ENCODE measurements at regions of chr6 and their contacts with region 1.

Region 1: GRCh38 chr6:44172731-44173500 is 14.3 kb downstream of the CAPN11 start:
- DNase-seq: peak; percentile 71
- H3K4me3 ChIP-seq: no peak overlapping the region
- H3K27ac ChIP-seq: no peak overlapping the region
- H3K4me1 ChIP-seq: peaks cover 19% of the 10 kb centered on the region
- H3K27me3 ChIP-seq: peaks cover 0 to 9% of the 10 kb centered on the region in 2 experiments
- CTCF ChIP-seq: peak; percentile 91 to 96
- POLR2A ChIP-seq: no peak

Region 2: DNA sequence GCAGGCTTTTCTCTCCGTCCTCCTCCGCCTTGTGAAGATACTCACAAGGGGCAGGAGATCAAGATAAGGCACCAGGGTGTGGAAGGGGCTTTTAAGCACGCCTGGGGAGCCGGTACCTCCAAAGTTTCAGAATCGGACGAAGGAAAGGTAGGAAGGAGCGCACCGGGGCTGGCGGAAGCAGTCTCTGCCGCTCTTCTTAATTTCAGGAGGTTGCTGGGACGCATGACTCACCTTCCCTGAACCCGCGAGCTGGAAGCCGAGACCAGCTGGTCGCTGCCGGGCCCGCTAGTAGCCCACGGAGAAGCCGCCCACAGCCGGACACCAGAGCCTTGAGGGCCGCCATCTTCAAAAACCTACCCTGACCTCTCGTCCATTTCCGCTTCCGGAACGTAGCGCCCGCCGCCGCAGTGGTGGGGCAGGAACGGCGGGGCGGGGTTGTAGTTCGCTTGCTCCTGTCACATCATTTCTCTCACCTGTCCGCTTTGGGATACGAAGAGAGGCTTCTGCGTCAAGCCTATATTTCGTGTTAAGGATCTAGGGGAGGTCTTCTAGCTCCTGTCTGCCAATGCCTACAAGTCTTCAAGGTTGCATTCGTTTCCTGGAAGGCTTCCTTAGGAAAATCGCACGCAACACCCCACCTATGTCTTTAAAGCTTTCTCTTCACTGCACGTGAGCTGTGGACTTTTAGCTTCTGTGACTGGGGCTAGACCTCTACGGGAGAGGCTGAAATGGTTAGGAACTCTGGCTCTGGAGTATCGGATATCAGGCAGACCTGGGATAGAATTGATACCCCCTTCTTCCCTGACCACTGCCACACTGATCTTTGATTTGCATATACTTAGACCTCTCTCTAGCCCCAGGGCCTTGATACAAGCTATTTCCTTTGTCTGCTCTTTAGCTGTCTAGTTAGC is 485.2 kb before region 1 on chr6 and contains the start of gene MRPS18A:
- CTCF ChIA-PET with region 1: no interaction called
- POLR2A ChIA-PET with region 1: no interaction called
- dilution Hi-C with region 1: no loop called
- intact Hi-C with region 1: no loop called
- DNase-seq: peak; percentile 71
- H3K4me3 ChIP-seq: peak within 1 kb of the TSS; percentile 45 to 95 (median 64)
- H3K27ac ChIP-seq: peak within 1 kb of the TSS; percentile 64
- H3K4me1 ChIP-seq: peaks cover 13% of the 10 kb centered on the region
- H3K27me3 ChIP-seq: no peaks in the 10 kb centered on the region
- CTCF ChIP-seq: no peak
- POLR2A ChIP-seq: peak; percentile 92
- total RNA-seq, gene MRPS18A: 39.1 and 39.8 TPM in 2 replicates

Region 3: DNA sequence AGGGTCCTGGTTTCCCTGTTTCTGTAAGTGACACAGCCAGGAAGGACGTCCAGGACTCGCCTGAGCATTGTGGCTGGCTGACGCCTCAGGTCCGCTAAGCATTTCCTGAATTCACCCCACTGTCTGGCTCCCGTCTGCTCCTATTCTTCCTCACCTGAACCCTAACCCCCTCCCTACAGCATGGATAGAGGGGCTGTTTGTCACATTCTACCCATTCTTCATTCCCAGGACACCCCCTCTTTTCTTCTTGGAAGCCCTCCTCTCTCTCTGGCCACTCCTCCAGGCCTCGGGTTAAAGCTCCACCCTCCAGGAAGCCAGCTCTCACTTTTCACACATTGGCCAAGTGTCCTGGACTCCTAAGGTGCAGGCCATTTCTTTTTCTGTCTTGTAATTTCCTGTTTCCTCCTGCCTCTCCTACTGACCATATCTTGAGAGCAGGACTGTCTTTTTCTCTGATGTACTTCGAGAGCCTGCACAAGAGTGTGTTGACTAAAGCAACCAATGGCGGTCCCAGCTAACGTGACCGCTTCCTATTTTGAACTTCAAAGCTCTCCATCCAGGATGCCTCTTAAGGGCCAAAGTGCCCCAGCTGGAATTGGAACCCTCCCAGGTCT is 19.6 kb after region 1 on chr6:
- CTCF ChIA-PET with region 1: interaction called, 8 read pairs
- POLR2A ChIA-PET with region 1: no interaction called
- dilution Hi-C with region 1: no loop called
- intact Hi-C with region 1: loop called (anchors 2 kb)
- DNase-seq: peak; percentile 56
- H3K4me3 ChIP-seq: no peak overlapping the region
- H3K27ac ChIP-seq: peak overlapping the region; percentile 58
- H3K4me1 ChIP-seq: peaks cover 12% of the 10 kb centered on the region
- H3K27me3 ChIP-seq: no peaks in the 10 kb centered on the region
- CTCF ChIP-seq: no peak
- POLR2A ChIP-seq: no peak

Region 4: DNA sequence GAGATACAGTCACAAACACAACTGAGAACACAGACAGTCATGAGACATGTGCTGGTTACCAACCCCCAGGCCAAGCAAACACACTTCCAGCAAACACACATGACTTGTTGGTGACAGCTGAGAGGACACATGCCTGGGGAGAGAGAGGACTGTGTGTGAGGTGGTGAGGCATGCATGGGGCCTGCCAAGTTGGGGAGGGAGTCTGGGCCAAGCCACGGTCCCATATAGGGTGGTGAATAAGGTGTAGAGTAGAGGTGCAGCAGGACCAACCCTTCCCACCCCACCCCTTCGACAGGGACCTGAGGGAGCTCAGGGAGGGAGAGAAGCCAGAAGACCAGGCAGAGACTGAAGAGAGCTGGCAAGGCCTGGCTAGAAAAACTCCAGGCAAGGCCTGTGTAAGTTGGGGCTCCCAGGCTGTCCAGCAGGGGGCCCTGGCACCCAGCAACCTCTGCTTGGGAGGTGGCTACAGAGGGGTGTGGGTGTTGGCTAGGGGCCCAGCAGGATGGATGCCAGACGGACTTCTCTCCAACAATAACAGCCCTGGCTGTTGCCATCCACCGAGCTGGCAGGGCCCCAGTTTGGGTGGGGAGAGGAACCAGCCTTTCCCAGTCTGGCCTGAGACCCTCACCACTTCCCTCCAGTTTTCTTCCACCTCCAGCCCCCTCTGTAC is 48.5 kb after region 1 on chr6:
- CTCF ChIA-PET with region 1: interaction called, 91 read pairs
- POLR2A ChIA-PET with region 1: interaction called, 9 read pairs
- dilution Hi-C with region 1: no loop called
- intact Hi-C with region 1: loop called (anchors 1 kb)
- DNase-seq: peak; percentile 95
- H3K4me3 ChIP-seq: peak overlapping the region in 1 of 3 experiments; percentile 30
- H3K27ac ChIP-seq: peak overlapping the region; percentile 97
- H3K4me1 ChIP-seq: peaks cover 61% of the 10 kb centered on the region
- H3K27me3 ChIP-seq: no peaks in the 10 kb centered on the region
- CTCF ChIP-seq: peak; percentile 89 to 98
- POLR2A ChIP-seq: no peak

Region 5: DNA sequence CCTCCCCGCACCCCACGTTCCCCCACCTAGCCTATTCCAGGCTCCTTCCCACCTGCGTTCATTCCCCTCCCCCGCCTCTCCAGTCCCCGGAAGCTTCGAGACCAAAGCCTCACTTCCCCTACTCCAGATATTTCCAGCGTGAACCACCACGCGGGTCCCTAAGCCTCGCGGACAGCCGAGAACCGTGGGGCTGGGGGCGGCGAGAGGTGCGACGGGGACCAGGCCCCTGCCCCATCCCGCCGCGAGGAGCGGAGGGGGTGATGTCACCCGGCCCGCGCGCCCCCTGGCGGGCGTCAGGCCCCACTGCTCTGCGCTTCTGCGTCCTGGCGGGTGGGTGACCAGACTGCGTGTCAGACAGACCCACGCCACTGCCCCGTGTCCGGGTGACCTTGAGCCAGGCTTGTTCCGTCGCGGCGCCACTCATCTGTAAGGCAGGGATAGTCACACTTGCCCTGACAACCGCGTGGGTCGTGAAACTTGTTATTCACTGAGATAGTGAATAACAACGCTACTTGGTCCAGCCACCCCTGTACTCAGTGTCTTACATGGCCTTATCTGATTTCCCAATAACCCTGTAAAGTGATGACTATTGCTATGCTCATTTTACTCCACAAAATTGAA is 65.0 kb after region 1 on chr6:
- CTCF ChIA-PET with region 1: interaction called, 148 read pairs
- POLR2A ChIA-PET with region 1: interaction called, 4 read pairs
- dilution Hi-C with region 1: no loop called
- intact Hi-C with region 1: loop called (anchors 1 kb)
- DNase-seq: peak; percentile 67
- H3K4me3 ChIP-seq: peak overlapping the region in 1 of 3 experiments; percentile 35
- H3K27ac ChIP-seq: peak overlapping the region; percentile 70
- H3K4me1 ChIP-seq: peaks cover 41% of the 10 kb centered on the region
- H3K27me3 ChIP-seq: no peaks in the 10 kb centered on the region
- CTCF ChIP-seq: peak; percentile 99
- POLR2A ChIP-seq: peak; percentile 13

Region 6: DNA sequence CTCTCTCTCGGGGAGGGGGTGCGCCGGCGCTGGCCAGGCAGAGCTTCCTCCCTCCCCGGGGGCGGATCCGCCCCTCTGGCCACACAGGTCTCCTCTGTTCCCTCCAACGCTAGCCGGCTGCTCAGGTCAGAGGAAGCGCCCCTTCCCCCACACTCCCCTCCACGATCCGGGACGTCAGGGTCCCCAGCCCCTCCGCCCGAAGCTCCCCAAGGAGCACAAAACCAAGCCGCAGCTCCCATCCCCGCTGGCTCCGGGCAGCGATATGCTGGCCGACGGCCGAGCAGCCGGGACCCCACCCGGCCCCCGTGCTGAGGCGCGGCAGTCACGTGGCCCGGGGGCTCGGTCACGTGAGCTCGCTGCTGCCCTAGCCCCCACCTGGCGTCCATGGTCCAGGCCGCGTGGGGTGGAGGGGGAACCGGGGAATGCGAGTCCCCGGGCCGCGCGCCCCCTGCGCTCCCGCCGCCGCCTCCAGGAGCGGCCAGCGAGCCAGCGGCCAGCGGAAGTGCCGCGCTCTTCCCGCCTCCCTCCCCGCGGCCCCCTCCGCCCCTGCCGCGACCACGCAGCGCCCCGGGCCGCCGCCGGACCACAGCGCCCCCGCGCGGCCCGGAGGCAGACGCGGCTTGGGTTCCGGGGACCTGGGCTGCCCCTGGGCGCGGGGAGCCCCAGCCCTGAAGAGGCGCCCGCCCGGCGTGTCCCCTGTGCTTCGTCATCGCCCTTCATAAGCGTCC is 84.3 kb after region 1 on chr6 and contains the start of gene SLC35B2:
- CTCF ChIA-PET with region 1: interaction called, 26 read pairs
- POLR2A ChIA-PET with region 1: no interaction called
- dilution Hi-C with region 1: no loop called
- intact Hi-C with region 1: loop called (anchors 1 kb)
- DNase-seq: peak; percentile 76
- H3K4me3 ChIP-seq: peak within 1 kb of the TSS; percentile 67 to 89 (median 74)
- H3K27ac ChIP-seq: peak within 1 kb of the TSS; percentile 49
- H3K4me1 ChIP-seq: peaks cover 14% of the 10 kb centered on the region
- H3K27me3 ChIP-seq: no peaks in the 10 kb centered on the region
- CTCF ChIP-seq: peak; percentile 65 to 66
- POLR2A ChIP-seq: peak; percentile 79
- total RNA-seq, gene SLC35B2: 53.4 and 53.9 TPM in 2 replicates

Region 7: GRCh38 chr6:44356487-44356886 is 183.6 kb after region 1 on chr6:
- CTCF ChIA-PET with region 1: no interaction called
- POLR2A ChIA-PET with region 1: no interaction called
- dilution Hi-C with region 1: no loop called
- intact Hi-C with region 1: no loop called
- DNase-seq: no peak
- H3K4me3 ChIP-seq: no peak overlapping the region
- H3K27ac ChIP-seq: no peak overlapping the region
- H3K4me1 ChIP-seq: no peaks in the 10 kb centered on the region
- H3K27me3 ChIP-seq: peaks cover 11% of the 10 kb centered on the region in 2 experiments
- CTCF ChIP-seq: no peak
- POLR2A ChIP-seq: no peak

Measured in endothelial cell of umbilical vein (primary cell).